ENCODE measurements at regions of chr7 and their contacts with region 1.

Region 1: GRCh38 chr7:42972699-42973500 is 40.7 kb downstream of the MRPL32 start:
- DNase-seq: peak in 1 of 2 donors; percentile 79
- H3K4me3 ChIP-seq: no peak overlapping the region
- H3K27ac ChIP-seq: peak overlapping the region; percentile 54 to 64
- H3K4me1 ChIP-seq: no peaks in the 10 kb centered on the region
- H3K27me3 ChIP-seq: no peaks in the 10 kb centered on the region
- CTCF ChIP-seq: no peak

Region 2: GRCh38 chr7:42426164-42426563 is 546.7 kb before region 1 on chr7:
- intact Hi-C with region 1: no loop called
- DNase-seq: no peak
- H3K4me3 ChIP-seq: no peak overlapping the region
- H3K27ac ChIP-seq: no peak overlapping the region
- H3K4me1 ChIP-seq: no peaks in the 10 kb centered on the region
- H3K27me3 ChIP-seq: no peaks in the 10 kb centered on the region
- CTCF ChIP-seq: no peak

Region 3: DNA sequence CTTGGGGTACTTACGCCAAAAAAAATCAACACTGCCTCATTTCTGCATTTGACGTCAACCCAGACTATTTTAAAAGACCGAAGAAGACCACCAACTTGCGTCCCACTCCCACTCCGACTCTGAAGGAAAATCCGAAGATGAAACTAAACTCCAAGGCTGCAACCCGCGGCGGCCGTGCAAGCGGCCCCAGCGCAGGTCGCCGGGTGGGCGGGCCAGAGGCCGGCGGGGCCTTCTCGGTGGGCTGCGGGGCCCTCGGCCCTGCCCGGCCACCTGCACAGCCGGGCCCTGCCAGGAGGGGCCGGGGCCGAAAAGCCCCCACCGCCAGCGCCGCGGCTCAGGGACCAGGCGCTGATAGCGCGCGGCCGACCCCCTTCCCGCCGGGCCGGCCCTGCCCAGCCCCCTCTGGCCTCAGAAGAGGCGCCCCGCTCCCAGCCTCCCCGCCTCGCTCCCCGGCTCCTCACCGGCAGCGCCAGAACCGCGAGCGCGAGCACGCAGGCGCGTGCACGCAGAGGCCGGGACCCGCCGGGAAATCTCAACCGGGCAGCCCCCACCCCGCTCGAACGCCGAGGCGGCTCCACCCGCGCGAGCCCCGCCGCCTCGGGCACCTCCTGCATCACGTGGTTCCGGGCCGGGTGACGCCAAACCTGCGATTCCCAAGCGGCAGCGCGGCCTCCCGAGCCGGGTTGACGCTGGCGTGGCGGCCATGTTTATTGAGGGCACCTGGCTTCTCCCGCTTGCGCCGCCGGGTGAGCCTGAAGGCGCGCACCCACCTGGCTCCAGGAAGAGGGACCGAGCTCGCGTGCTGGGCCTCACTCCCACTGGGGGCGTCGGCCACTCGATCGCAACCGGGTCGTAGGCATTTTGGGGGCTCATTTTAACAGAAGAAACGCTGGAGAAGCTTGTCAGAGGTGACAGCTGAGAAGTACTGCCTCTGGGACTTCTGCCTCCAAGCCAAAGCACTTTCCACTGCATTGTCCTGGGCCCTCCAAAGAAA is 61.1 kb before region 1 on chr7 and contains the start of gene C7orf25:
- intact Hi-C with region 1: loop called (anchors 2 kb)
- DNase-seq: peak; percentile 85 to 97
- H3K4me3 ChIP-seq: peak within 1 kb of the TSS; percentile 82 to 87
- H3K27ac ChIP-seq: peak within 1 kb of the TSS; percentile 70 to 72
- H3K4me1 ChIP-seq: peaks cover 7% of the 10 kb centered on the region in 2 donors
- H3K27me3 ChIP-seq: no peaks in the 10 kb centered on the region
- CTCF ChIP-seq: no peak
- total RNA-seq, gene C7orf25: 0.75 TPM

Region 4: GRCh38 chr7:42931834-42932651 is 40.9 kb before region 1 on chr7 and contains the starts of genes MRPL32 and PSMA2:
- intact Hi-C with region 1: loop called (anchors 1 kb)
- DNase-seq: peak; percentile 87 to 98
- H3K4me3 ChIP-seq: peak within 1 kb of the TSS; percentile 89 to 94
- H3K27ac ChIP-seq: peak within 1 kb of the TSS; percentile 78 to 87
- H3K4me1 ChIP-seq: peaks cover 4 to 25% of the 10 kb centered on the region in 2 donors
- H3K27me3 ChIP-seq: no peaks in the 10 kb centered on the region
- CTCF ChIP-seq: no peak
- total RNA-seq, gene MRPL32: 24.3 TPM
- total RNA-seq, gene PSMA2: 61.4 TPM

Region 5: DNA sequence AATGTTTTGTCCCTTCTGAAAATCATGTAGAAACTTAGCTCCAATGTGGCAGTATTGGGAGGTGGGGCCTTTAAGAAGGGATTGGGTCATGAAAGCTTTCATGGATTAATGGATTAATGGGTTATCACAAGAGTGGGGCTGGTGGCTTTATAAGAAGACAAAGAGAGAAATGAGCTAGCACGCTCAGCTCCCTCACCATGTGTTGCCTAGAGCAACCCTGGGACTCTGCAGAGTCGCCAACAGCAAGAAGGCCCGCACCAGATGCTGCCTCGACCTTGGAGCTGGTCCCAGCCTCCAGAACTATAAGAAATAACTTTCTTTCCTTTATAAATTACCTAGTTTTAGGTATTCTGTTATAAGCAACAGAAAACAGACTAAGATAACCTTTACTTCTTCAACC is 64.6 kb after region 1 on chr7:
- intact Hi-C with region 1: loop called (anchors 2 kb)
- DNase-seq: no peak
- H3K4me3 ChIP-seq: no peak overlapping the region
- H3K27ac ChIP-seq: no peak overlapping the region
- H3K4me1 ChIP-seq: peaks cover 0 to 3% of the 10 kb centered on the region in 2 donors
- H3K27me3 ChIP-seq: no peaks in the 10 kb centered on the region
- CTCF ChIP-seq: no peak

Region 6: GRCh38 chr7:43112941-43113621 is 140.2 kb after region 1 on chr7:
- intact Hi-C with region 1: loop called (anchors 10 kb)
- DNase-seq: no peak
- H3K4me3 ChIP-seq: peak overlapping the region; percentile 52 to 66
- H3K27ac ChIP-seq: no peak overlapping the region
- H3K4me1 ChIP-seq: peaks cover 11% of the 10 kb centered on the region in 2 donors
- H3K27me3 ChIP-seq: peaks cover 12% of the 10 kb centered on the region
- CTCF ChIP-seq: no peak